RWPE1 (cell line): ENCODE measurements at regions of chr7 and their contacts with region 1.

Region 1: GRCh38 chr7:92833024-92833765 is 3.2 kb downstream of the CDK6 start:
- DNase-seq: peak; percentile 68
- H3K27ac ChIP-seq: peak overlapping the region; percentile 96
- CTCF ChIP-seq: peak; percentile 96

Region 2: DNA sequence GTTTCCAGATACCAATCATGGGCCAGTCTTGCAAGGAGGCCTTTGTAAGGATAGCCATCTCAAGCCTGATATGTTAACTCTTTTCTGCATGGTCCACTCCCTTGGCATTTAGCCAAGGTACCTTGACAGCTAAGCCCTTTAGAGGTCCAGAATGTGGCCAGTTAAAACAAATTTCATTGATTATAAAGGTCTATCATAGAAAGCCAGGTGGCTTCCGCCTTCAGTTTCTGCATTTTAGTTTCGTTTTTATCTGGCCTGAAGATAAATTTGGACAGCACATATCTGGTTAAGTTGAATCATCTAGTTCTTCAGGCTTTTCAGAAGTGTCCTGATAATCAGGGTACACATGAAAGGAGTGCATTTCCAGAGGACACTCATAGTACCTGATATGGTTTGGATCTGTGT is 556.7 kb before region 1 on chr7:
- CTCF ChIA-PET with region 1: no interaction called
- POLR2A ChIA-PET with region 1: no interaction called
- DNase-seq: no peak
- H3K27ac ChIP-seq: no peak overlapping the region
- CTCF ChIP-seq: no peak

Region 3: DNA sequence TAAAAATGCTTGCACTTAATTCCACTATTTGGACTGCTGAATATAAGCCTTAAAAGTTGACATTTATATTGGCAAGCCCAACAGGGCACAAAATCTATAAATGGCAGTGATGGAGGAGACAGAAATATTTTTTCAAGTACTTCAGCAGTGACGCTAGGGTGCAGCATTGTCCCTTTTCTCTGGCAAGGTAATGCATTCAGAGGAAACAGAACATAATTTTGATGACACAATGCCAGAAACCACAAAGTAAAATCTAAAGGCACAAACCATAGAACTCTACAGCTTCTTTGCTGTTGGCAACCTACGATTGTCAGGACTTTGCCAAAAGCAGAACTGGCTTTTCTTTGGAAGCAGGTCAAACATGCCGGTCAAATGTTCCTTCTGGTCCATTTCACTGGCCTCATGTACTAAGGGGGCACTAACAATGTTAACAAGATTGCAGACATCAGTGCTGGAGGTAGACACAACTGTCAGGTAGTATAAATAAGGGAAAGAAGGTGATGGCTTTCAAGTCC is 212.1 kb before region 1 on chr7:
- CTCF ChIA-PET with region 1: interaction called, 18 read pairs
- POLR2A ChIA-PET with region 1: no interaction called
- DNase-seq: peak; percentile 41
- H3K27ac ChIP-seq: no peak overlapping the region
- CTCF ChIP-seq: peak; percentile 92

Region 4: GRCh38 chr7:92768501-92769393 is 64.4 kb before region 1 on chr7:
- CTCF ChIA-PET with region 1: interaction called, 18 read pairs
- POLR2A ChIA-PET with region 1: no interaction called
- DNase-seq: no peak
- H3K27ac ChIP-seq: no peak overlapping the region
- CTCF ChIP-seq: no peak